Activated naive CD4-positive, alpha-beta T cell treated with anti-CD3 and anti-CD28 coated beads, Interleukin-2, amount 10 ng/mL, durations not matched to agents 7 days and 5 days (primary cell): ENCODE measurements at regions of chr12 and their contacts with region 1.

Region 1: DNA sequence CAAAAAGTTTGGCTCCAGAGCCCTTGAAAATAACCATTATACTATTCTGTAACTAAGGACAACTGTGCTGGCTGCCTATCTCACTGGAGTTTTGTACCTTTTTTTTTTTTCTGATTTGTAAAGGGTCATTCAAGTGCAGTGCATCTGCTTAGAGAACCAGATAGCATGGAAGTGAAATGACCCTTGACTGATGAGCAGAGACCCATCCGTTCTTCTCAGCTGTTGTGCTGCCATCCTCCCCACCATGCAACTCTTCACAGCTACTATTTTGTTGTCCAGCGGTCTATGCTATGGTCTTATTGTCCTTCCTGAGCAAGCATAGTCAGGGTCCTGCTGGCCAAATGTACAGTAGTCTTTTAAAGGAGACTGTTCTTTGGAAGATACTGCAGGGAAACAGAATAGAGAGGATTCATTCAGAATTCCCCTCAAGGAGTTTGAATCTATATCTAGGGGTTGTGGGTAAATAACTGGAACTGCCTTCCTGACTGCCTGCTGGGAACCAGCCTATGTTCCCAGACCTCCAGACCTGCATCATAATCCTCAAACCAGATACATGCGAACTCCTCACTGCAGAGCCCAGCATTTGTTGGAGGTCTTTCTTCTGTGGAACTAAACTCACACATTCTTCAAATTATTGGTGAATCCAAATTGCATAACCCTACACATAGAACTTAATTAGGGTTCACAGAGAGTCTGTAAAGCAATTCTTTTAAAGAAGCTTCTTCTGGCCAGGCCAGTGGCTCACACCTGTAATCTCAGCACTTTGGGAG is 41.1 kb downstream of the GPR19 start:
- DNase-seq: no peak
- H3K4me3 Mint-ChIP-seq: no peak overlapping the region
- H3K27ac Mint-ChIP-seq: no peak overlapping the region
- H3K4me1 Mint-ChIP-seq: peaks cover 12% of the 10 kb centered on the region
- H3K27me3 Mint-ChIP-seq: no peaks in the 10 kb centered on the region

Region 2: GRCh38 chr12:12474931-12475795 is 179.7 kb before region 1 on chr12:
- CTCF ChIA-PET with region 1: no interaction called
- DNase-seq: peak; percentile 56
- H3K4me3 Mint-ChIP-seq: peak overlapping the region; percentile 43
- H3K27ac Mint-ChIP-seq: peak overlapping the region; percentile 96
- H3K4me1 Mint-ChIP-seq: peaks cover 64% of the 10 kb centered on the region
- H3K27me3 Mint-ChIP-seq: no peaks in the 10 kb centered on the region

Region 3: GRCh38 chr12:12562585-12563261 is 92.2 kb before region 1 on chr12 and contains the start of gene DUSP16:
- CTCF ChIA-PET with region 1: interaction called, 13 read pairs
- DNase-seq: peak; percentile 88
- H3K4me3 Mint-ChIP-seq: peak within 1 kb of the TSS; percentile 83
- H3K27ac Mint-ChIP-seq: peak within 1 kb of the TSS; percentile 96
- H3K4me1 Mint-ChIP-seq: peaks cover 46% of the 10 kb centered on the region
- H3K27me3 Mint-ChIP-seq: peaks cover 3% of the 10 kb centered on the region

Region 4: GRCh38 chr12:12592930-12593329 is 61.9 kb before region 1 on chr12:
- CTCF ChIA-PET with region 1: no interaction called
- DNase-seq: no peak
- H3K4me3 Mint-ChIP-seq: no peak overlapping the region
- H3K27ac Mint-ChIP-seq: no peak overlapping the region
- H3K4me1 Mint-ChIP-seq: no peaks in the 10 kb centered on the region
- H3K27me3 Mint-ChIP-seq: peaks cover 31% of the 10 kb centered on the region

Region 5: DNA sequence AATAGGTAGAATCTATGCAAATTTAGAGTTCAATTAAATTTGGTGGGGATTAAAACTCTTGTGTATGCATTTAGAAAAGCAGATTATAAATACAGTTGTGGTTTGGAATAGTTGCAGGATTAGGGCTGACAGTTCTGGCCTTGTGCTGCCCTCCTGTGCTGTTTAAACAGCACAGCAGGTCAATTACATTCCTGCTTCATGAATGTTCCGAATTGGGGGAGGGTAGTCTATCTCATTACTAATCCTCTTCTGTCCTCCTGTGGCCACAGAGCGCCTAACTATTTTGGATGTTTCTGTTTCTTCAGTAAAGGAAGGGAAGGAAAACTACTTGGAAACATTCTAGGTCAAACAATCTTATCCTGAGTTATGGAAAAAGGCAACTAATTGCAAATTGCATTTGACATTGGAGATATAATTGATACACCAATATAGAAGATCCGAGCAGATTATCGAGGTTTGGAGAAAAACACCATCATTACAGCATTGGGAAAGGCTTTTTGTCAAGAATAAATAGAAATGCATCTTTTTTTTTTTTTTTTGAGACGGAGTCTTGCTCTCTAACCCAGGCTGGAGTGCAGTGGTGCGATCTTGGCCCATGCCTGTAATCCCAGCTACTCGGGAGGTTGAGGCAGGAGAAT is 49.8 kb after region 1 on chr12:
- CTCF ChIA-PET with region 1: interaction called, 11 read pairs
- DNase-seq: peak; percentile 58
- H3K4me3 Mint-ChIP-seq: no peak overlapping the region
- H3K27ac Mint-ChIP-seq: peak overlapping the region; percentile 69
- H3K4me1 Mint-ChIP-seq: peaks cover 14% of the 10 kb centered on the region
- H3K27me3 Mint-ChIP-seq: no peaks in the 10 kb centered on the region